ENCODE measurements at regions of chr5 and their contacts with region 1.

Region 1: GRCh38 chr5:138698713-138699112 is 54.5 kb upstream of the CTNNA1 start:
- DNase-seq: no peak
- H3K4me3 ChIP-seq: no peak overlapping the region
- H3K27ac ChIP-seq: no peak overlapping the region
- H3K4me1 ChIP-seq: no peaks in the 10 kb centered on the region
- H3K27me3 ChIP-seq: no peaks in the 10 kb centered on the region
- CTCF ChIP-seq: no peak

Region 2: GRCh38 chr5:138303369-138303768 is 395.3 kb before region 1 on chr5:
- CTCF ChIA-PET with region 1: no interaction called
- POLR2A ChIA-PET with region 1: no interaction called
- intact Hi-C with region 1: no loop called
- DNase-seq: no peak
- H3K4me3 ChIP-seq: no peak overlapping the region
- H3K27ac ChIP-seq: no peak overlapping the region
- H3K4me1 ChIP-seq: no peaks in the 10 kb centered on the region
- H3K27me3 ChIP-seq: no peaks in the 10 kb centered on the region
- CTCF ChIP-seq: no peak

Region 3: GRCh38 chr5:138793575-138793974 is 94.9 kb after region 1 on chr5:
- CTCF ChIA-PET with region 1: interaction called, 12 read pairs
- POLR2A ChIA-PET with region 1: no interaction called
- intact Hi-C with region 1: no loop called
- DNase-seq: peak; percentile 88
- H3K4me3 ChIP-seq: no peak overlapping the region
- H3K27ac ChIP-seq: no peak overlapping the region
- H3K4me1 ChIP-seq: peaks cover 24% of the 10 kb centered on the region
- H3K27me3 ChIP-seq: no peaks in the 10 kb centered on the region
- CTCF ChIP-seq: no peak